Activated CD4-positive, alpha-beta memory T cell treated with anti-CD3 and anti-CD28 coated beads for 36 hours (primary cell): ENCODE measurements at regions of chr9 and their contacts with region 1.

Region 1: GRCh38 chr9:5493679-5494511 is 16.4 kb upstream of the PDCD1LG2 start:
- DNase-seq: peak; percentile 70
- H3K4me3 Mint-ChIP-seq: no peak overlapping the region
- H3K27ac Mint-ChIP-seq: peak overlapping the region; percentile 72
- H3K4me1 Mint-ChIP-seq: peaks cover 23% of the 10 kb centered on the region
- H3K27me3 Mint-ChIP-seq: no peaks in the 10 kb centered on the region

Region 2: DNA sequence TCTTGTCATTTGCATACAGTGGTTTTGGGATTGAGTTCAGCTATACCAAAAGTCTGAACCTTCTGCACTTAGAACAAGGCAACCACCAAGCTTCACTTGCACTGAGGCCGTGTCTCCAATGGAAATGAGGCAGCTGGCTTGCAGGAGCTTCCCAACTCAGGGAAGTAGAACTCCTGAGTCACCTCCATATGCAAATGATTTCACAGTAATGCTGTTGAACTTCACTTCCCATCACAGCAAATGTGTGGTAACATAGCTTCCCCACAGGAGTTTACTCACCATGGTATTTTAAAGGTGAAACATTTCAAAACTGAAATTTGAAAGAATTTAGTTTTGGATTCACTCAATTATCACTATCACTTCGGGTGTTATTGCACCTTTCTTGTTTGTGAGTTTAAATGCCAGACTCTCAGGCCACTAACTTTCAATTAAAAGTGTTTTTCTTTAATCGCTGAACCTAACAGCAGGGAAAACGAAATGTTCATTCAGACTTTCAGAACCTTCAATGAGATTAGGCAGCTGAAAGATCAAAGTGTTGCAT is 34.5 kb before region 1 on chr9:
- CTCF ChIA-PET with region 1: no interaction called
- POLR2A ChIA-PET with region 1: interaction called, 6 read pairs
- intact Hi-C with region 1: loop called (anchors 1 kb)
- DNase-seq: peak; percentile 57
- H3K4me3 Mint-ChIP-seq: peak overlapping the region; percentile 68
- H3K27ac Mint-ChIP-seq: peak overlapping the region; percentile 87
- H3K4me1 Mint-ChIP-seq: peaks cover 73% of the 10 kb centered on the region
- H3K27me3 Mint-ChIP-seq: no peaks in the 10 kb centered on the region

Region 3: DNA sequence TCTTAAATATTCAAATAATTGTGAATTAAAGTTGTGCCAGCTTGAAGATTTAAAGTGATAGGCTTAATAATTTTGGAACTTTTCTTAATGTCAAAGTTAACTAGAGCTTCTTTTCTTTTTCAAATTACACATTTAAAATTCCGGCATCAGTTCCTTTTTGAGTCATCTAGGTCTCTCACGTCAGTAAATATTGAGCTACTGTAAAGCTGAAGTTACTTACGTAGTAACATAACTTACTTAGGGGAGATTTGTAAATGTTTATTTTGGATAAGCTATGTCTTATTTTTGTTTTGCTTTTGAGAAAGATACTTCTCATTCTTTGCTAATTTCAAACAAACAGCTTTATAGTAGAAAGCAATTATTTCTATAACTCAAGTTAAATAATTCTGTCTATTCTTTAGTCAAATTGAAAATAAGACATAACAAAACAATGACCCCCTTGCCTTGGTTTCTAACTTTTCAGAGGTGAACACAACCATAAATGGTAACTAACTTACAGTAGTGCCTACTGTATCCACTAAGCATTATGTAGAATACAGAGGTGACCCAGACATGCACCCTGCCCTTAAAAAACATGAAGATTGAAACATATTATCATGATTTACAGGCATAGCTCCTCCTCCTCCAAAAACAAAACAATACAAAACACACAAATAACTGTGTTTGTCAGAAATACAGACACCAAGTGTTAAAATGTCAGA is 13.8 kb before region 1 on chr9:
- CTCF ChIA-PET with region 1: interaction called, 3 read pairs
- POLR2A ChIA-PET with region 1: interaction called, 5 read pairs
- intact Hi-C with region 1: loop called (anchors 1 kb)
- DNase-seq: no peak
- H3K4me3 Mint-ChIP-seq: no peak overlapping the region
- H3K27ac Mint-ChIP-seq: no peak overlapping the region
- H3K4me1 Mint-ChIP-seq: peaks cover 21% of the 10 kb centered on the region
- H3K27me3 Mint-ChIP-seq: no peaks in the 10 kb centered on the region